Heart right ventricle (tissue), 16 donors: ENCODE measurements at regions of chr5 and their contacts with region 1.

Region 1: GRCh38 chr5:147949711-147950573 is 43.6 kb upstream of the C5orf46 start:
- DNase-seq: no peak
- ATAC-seq: peak in 1 of 8 donors; percentile 61
- H3K4me3 ChIP-seq: no peak overlapping the region
- H3K27ac ChIP-seq: no peak overlapping the region
- H3K4me1 ChIP-seq: peaks cover 0 to 1% (median 0%) of the 10 kb centered on the region in 9 donors
- H3K27me3 ChIP-seq: no peaks in the 10 kb centered on the region
- CTCF ChIP-seq: peak; percentile 38 to 83 (median 72)

Region 2: DNA sequence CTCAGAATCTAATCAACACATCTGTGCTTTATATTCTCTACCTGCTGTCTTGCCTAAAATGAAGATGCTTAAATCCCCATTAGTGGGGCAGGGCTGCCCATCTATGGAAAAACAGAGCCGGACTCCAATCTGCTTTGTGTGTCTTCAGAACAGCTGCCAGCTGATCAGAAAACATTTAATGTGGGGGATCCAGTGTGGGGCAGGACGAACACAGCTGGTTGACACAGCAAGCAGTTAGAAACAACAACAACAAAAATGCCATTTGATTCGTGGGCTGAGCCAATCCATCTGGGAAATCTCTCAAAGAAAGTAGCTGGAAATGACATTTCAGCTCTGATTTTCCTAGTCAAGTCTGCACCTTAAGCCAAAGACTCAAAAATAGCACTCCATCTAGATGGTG is 1171.1 kb before region 1 on chr5:
- intact Hi-C with region 1: no loop called
- DNase-seq: no peak
- ATAC-seq: no peak
- H3K4me3 ChIP-seq: no peak overlapping the region
- H3K27ac ChIP-seq: no peak overlapping the region
- H3K4me1 ChIP-seq: no peaks in the 10 kb centered on the region
- H3K27me3 ChIP-seq: no peaks in the 10 kb centered on the region
- CTCF ChIP-seq: no peak

Region 3: DNA sequence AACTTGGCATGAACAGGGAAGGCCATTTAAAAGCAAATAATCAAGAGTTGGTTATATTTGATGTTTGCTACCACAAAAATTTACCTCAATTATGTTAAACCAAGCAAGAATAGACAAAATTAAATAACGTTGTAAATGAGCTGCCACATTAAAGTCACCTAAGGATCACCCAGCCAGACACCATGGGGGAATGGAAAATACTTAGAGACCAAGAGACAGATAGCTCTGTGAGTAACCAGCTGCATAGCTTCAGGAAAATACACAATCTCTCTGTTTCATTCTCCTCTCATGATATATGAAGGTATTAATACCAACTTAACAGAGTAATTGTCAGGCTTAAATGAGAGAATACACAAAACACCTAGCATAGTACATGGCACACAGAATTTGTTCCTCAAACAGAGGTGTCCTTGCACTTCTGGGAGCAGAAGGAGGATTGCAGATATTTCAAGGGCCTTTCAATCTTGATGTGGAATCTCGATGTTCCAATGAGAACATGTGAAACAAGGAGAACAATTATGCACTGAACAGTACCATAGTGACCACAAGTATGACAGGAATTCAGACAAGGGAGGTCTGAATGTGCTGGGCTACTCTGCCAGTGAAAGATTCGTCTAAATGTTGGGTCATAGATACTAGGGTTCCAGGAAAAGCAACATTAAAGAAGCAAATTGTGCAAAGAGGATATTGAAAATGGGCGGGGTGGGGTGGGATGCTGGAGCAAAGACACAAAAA is 186.0 kb before region 1 on chr5:
- intact Hi-C with region 1: no loop called
- DNase-seq: no peak
- ATAC-seq: no peak
- H3K4me3 ChIP-seq: no peak overlapping the region
- H3K27ac ChIP-seq: no peak overlapping the region
- H3K4me1 ChIP-seq: peaks cover 0 to 4% (median 0%) of the 10 kb centered on the region in 9 donors
- H3K27me3 ChIP-seq: no peaks in the 10 kb centered on the region
- CTCF ChIP-seq: no peak

Region 4: DNA sequence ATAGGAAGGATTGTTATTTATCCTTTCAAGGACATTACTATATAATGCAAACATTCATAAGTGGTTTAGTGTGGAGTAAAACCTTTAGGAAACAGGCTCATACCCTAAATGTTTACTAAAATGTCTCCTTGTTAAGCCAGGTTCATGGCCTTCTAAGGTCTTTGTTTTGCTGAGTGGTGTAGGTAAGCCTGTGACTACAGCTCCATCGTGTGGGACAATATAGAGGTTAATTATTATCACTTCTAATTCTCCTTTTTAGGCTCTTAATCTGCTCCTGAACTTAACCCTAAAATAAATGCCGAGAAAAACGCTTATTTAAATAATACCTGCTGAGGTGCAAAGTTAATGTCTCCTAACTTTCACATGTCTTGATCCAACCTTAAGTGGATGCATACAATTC is 157.7 kb after region 1 on chr5:
- intact Hi-C with region 1: loop called in 6 of 10 experiments (anchors 1 to 10 kb)
- DNase-seq: no peak
- ATAC-seq: no peak
- H3K4me3 ChIP-seq: no peak overlapping the region
- H3K27ac ChIP-seq: no peak overlapping the region
- H3K4me1 ChIP-seq: no peaks in the 10 kb centered on the region
- H3K27me3 ChIP-seq: peaks cover 0 to 3% (median 0%) of the 10 kb centered on the region in 7 donors
- CTCF ChIP-seq: peak in 6 of 9 donors; percentile 21 to 49 (median 30)

Region 5: DNA sequence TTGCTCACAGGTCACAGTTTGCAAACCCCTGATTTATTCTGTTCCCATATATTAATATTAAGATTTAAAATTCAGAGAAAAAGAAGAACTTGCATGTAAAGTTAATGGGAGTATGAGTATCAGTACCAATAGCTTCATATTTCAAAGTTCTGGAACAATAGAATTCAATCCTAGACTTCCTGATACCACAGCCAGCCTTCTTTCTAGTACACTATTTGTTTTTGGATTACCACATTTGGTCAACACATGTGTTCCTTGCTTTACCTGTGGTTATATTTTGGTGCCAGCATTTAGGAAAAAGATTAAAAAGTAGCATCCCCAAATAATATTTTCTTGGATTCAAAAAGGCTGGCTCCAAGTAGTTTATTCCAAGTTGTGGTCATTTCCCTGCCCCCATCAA is 163.3 kb after region 1 on chr5:
- intact Hi-C with region 1: loop called in 9 of 10 experiments (anchors 2 to 10 kb)
- DNase-seq: no peak
- ATAC-seq: no peak
- H3K4me3 ChIP-seq: no peak overlapping the region
- H3K27ac ChIP-seq: no peak overlapping the region
- H3K4me1 ChIP-seq: peaks cover 0 to 6% (median 0%) of the 10 kb centered on the region in 9 donors
- H3K27me3 ChIP-seq: peaks cover 0 to 3% (median 0%) of the 10 kb centered on the region in 7 donors
- CTCF ChIP-seq: no peak

Region 6: DNA sequence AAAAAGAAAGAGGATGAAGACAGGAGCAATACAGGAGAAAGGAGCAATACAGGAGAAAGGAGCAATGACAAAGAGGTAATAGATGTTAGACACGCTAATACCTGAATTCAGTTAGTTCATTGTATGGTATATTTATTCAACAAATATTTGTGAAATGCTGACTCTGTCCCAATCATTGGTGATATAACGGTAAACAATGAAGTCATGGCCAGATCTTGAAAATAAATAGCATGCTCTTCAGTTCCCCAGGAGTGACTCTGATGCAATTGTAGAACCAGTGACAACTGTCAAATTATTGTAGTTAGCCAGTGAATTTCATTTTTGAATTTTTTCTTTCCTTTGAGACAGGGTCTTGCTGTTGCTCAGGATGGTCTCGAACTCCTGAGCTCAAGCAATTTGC is 170.4 kb after region 1 on chr5:
- intact Hi-C with region 1: loop called in 7 of 10 experiments (anchors 2 to 10 kb)
- DNase-seq: no peak
- ATAC-seq: no peak
- H3K4me3 ChIP-seq: no peak overlapping the region
- H3K27ac ChIP-seq: no peak overlapping the region
- H3K4me1 ChIP-seq: no peaks in the 10 kb centered on the region
- H3K27me3 ChIP-seq: no peaks in the 10 kb centered on the region
- CTCF ChIP-seq: no peak

Region 7: GRCh38 chr5:148383564-148384379 is 433.8 kb after region 1 on chr5 and contains the start of gene FBXO38:
- intact Hi-C with region 1: loop called in 1 of 10 experiments (anchors 10 kb)
- DNase-seq: peak; percentile 94 to 98
- ATAC-seq: peak; percentile 97 to 100 (median 98)
- H3K4me3 ChIP-seq: peak within 1 kb of the TSS; percentile 62 to 92 (median 84)
- H3K27ac ChIP-seq: peak within 1 kb of the TSS; percentile 77 to 98 (median 91)
- H3K4me1 ChIP-seq: peaks cover 0 to 89% (median 66%) of the 10 kb centered on the region in 9 donors
- H3K27me3 ChIP-seq: no peaks in the 10 kb centered on the region
- CTCF ChIP-seq: peak in 2 of 9 donors; percentile 21 to 31
- total RNA-seq, gene FBXO38: 31.7 to 66.4 (median 48.4) TPM